Activated CD8-positive, alpha-beta memory T cell treated with anti-CD3 and anti-CD28 coated beads, Interleukin-2, amount 10 ng/mL, durations not matched to agents 7 days and 5 days (primary cell): ENCODE measurements at regions of chr12 and their contacts with region 1.

Region 1: GRCh38 chr12:810671-811415 is 58.5 kb downstream of the WNK1 start:
- DNase-seq: peak; percentile 75
- ATAC-seq: peak; percentile 85
- H3K4me3 Mint-ChIP-seq: peak overlapping the region; percentile 36
- H3K27ac Mint-ChIP-seq: peak overlapping the region; percentile 59
- H3K4me1 Mint-ChIP-seq: peaks cover 70% of the 10 kb centered on the region
- H3K27me3 Mint-ChIP-seq: no peaks in the 10 kb centered on the region

Region 2: DNA sequence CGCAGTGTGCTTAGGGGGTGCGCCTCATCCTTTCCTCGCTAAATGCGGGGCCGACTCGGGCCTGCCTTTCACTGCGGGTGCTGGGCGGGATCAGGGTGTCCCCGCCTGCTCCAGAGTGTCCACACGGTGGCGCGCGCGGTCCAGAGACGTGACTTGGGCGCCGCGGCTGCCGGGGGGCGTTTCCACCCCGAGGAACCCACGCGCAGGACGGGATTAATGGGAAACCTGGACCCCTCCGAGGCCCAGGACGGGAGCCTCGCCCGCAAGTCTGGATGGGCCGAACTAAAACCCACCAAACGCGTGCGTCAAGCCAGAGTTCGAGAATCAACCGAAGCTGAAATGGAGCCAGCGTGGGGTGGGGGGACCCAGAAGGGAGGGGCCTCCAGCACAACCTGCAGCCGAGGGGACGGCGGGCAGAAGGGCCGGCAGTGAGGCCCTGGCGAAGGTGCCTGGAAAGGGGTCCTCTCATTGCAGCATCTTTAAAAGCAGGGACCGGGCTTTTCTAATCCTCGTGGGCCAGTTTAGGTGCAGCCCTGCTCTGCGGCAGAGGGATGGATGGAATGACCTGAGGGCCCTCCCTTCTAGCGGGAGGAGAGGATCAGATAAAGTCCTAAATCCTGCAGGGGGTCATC is 240.9 kb before region 1 on chr12:
- CTCF ChIA-PET with region 1: interaction called, 39 read pairs
- DNase-seq: peak; percentile 90
- ATAC-seq: peak; percentile 91
- H3K4me3 Mint-ChIP-seq: peak overlapping the region; percentile 75
- H3K27ac Mint-ChIP-seq: peak overlapping the region; percentile 51
- H3K4me1 Mint-ChIP-seq: peaks cover 49% of the 10 kb centered on the region
- H3K27me3 Mint-ChIP-seq: no peaks in the 10 kb centered on the region

Region 3: GRCh38 chr12:614411-614970 is 196.4 kb before region 1 on chr12:
- CTCF ChIA-PET with region 1: interaction called, 32 read pairs
- DNase-seq: peak; percentile 54
- ATAC-seq: no peak
- H3K4me3 Mint-ChIP-seq: no peak overlapping the region
- H3K27ac Mint-ChIP-seq: peak overlapping the region; percentile 12
- H3K4me1 Mint-ChIP-seq: peaks cover 42% of the 10 kb centered on the region
- H3K27me3 Mint-ChIP-seq: no peaks in the 10 kb centered on the region

Region 4: GRCh38 chr12:761256-761655 is 49.6 kb before region 1 on chr12:
- CTCF ChIA-PET with region 1: interaction called, 11 read pairs
- DNase-seq: no peak
- ATAC-seq: no peak
- H3K4me3 Mint-ChIP-seq: no peak overlapping the region
- H3K27ac Mint-ChIP-seq: no peak overlapping the region
- H3K4me1 Mint-ChIP-seq: peaks cover 58% of the 10 kb centered on the region
- H3K27me3 Mint-ChIP-seq: no peaks in the 10 kb centered on the region

Region 5: GRCh38 chr12:779745-780734 is 30.8 kb before region 1 on chr12:
- CTCF ChIA-PET with region 1: interaction called, 12 read pairs
- DNase-seq: no peak
- ATAC-seq: peak; percentile 61
- H3K4me3 Mint-ChIP-seq: peak overlapping the region; percentile 65
- H3K27ac Mint-ChIP-seq: peak overlapping the region; percentile 72
- H3K4me1 Mint-ChIP-seq: peaks cover 58% of the 10 kb centered on the region
- H3K27me3 Mint-ChIP-seq: no peaks in the 10 kb centered on the region